Activated CD8-positive, alpha-beta T cell treated with anti-CD3 and anti-CD28 coated beads for 36 hours (primary cell): ENCODE measurements at regions of chr1 and their contacts with region 1.

Region 1: GRCh38 chr1:245045087-245045881 is 109.5 kb upstream of the KIF26B start:
- DNase-seq: no peak
- ATAC-seq: no peak
- H3K4me3 Mint-ChIP-seq: no peak overlapping the region
- H3K27ac Mint-ChIP-seq: no peak overlapping the region
- H3K4me1 Mint-ChIP-seq: no peaks in the 10 kb centered on the region
- H3K27me3 Mint-ChIP-seq: no peaks in the 10 kb centered on the region
- CTCF ChIP-seq: no peak

Region 2: GRCh38 chr1:244599937-244600350 is 445.3 kb before region 1 on chr1:
- CTCF ChIA-PET with region 1: interaction called, 28 read pairs
- POLR2A ChIA-PET with region 1: no interaction called
- intact Hi-C with region 1: loop called (anchors 5 kb)
- DNase-seq: peak; percentile 67
- ATAC-seq: peak; percentile 93
- H3K4me3 Mint-ChIP-seq: peak overlapping the region; percentile 47
- H3K27ac Mint-ChIP-seq: peak overlapping the region; percentile 86
- H3K4me1 Mint-ChIP-seq: peaks cover 18% of the 10 kb centered on the region
- H3K27me3 Mint-ChIP-seq: peaks cover 6% of the 10 kb centered on the region
- CTCF ChIP-seq: no peak

Region 3: GRCh38 chr1:244835276-244836134 is 209.8 kb before region 1 on chr1 and contains the start of gene COX20:
- CTCF ChIA-PET with region 1: interaction called, 11 read pairs
- POLR2A ChIA-PET with region 1: interaction called, 3 read pairs
- intact Hi-C with region 1: no loop called
- DNase-seq: peak; percentile 88
- ATAC-seq: peak; percentile 61
- H3K4me3 Mint-ChIP-seq: peak within 1 kb of the TSS; percentile 93
- H3K27ac Mint-ChIP-seq: peak within 1 kb of the TSS; percentile 98
- H3K4me1 Mint-ChIP-seq: peaks cover 38% of the 10 kb centered on the region
- H3K27me3 Mint-ChIP-seq: no peaks in the 10 kb centered on the region
- CTCF ChIP-seq: no peak
- total RNA-seq, gene COX20: 33.1 to 34.7 TPM

Region 4: GRCh38 chr1:244864253-244865027 is 180.8 kb before region 1 on chr1 and contains the start of gene HNRNPU:
- CTCF ChIA-PET with region 1: interaction called, 34 read pairs
- POLR2A ChIA-PET with region 1: interaction called, 5 read pairs
- intact Hi-C with region 1: loop called (anchors 5 kb)
- DNase-seq: peak; percentile 97
- ATAC-seq: peak; percentile 80
- H3K4me3 Mint-ChIP-seq: peak within 1 kb of the TSS; percentile 95
- H3K27ac Mint-ChIP-seq: peak within 1 kb of the TSS; percentile 99
- H3K4me1 Mint-ChIP-seq: peaks cover 34% of the 10 kb centered on the region
- H3K27me3 Mint-ChIP-seq: no peaks in the 10 kb centered on the region
- CTCF ChIP-seq: peak; percentile 54
- total RNA-seq, gene HNRNPU: 469 to 474 TPM

Region 5: DNA sequence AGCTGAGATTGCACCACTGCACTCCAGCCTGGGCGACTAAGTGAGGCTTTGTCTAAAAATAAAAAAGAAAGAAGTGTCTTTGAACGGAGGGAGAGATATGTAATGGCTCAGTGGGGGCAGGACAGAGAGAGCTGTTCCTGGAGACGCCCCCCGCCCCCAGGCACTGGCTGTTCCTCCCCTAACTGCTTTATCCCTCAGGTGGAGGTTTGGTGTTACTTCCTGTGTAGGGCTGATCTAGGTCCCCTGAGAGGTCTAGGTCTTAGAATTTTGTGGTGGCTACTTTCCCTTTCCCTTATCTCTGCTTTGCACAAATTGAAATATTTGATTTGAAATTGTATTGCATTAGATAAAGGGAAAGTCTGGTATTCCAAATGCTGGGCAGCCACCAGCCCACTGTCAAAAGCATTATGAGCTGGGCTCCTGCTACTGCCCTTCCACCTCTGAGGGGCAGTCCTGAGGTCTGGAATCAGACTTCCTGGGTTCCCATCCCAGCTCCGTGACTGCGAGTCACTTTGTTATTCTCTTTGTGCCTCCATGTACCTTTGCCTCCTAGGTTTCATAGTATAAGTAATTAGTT is 25.3 kb before region 1 on chr1:
- CTCF ChIA-PET with region 1: interaction called, 29 read pairs
- POLR2A ChIA-PET with region 1: no interaction called
- intact Hi-C with region 1: no loop called
- DNase-seq: peak; percentile 8
- ATAC-seq: peak; percentile 79
- H3K4me3 Mint-ChIP-seq: no peak overlapping the region
- H3K27ac Mint-ChIP-seq: no peak overlapping the region
- H3K4me1 Mint-ChIP-seq: peaks cover 6% of the 10 kb centered on the region
- H3K27me3 Mint-ChIP-seq: no peaks in the 10 kb centered on the region
- CTCF ChIP-seq: no peak

Region 6: GRCh38 chr1:245121513-245121912 is 76.2 kb after region 1 on chr1:
- CTCF ChIA-PET with region 1: no interaction called
- POLR2A ChIA-PET with region 1: no interaction called
- intact Hi-C with region 1: no loop called
- DNase-seq: no peak
- ATAC-seq: no peak
- H3K4me3 Mint-ChIP-seq: no peak overlapping the region
- H3K27ac Mint-ChIP-seq: no peak overlapping the region
- H3K4me1 Mint-ChIP-seq: no peaks in the 10 kb centered on the region
- H3K27me3 Mint-ChIP-seq: no peaks in the 10 kb centered on the region
- CTCF ChIP-seq: no peak